ENCODE measurements at regions of chr12 and their contacts with region 1.

Region 1: DNA sequence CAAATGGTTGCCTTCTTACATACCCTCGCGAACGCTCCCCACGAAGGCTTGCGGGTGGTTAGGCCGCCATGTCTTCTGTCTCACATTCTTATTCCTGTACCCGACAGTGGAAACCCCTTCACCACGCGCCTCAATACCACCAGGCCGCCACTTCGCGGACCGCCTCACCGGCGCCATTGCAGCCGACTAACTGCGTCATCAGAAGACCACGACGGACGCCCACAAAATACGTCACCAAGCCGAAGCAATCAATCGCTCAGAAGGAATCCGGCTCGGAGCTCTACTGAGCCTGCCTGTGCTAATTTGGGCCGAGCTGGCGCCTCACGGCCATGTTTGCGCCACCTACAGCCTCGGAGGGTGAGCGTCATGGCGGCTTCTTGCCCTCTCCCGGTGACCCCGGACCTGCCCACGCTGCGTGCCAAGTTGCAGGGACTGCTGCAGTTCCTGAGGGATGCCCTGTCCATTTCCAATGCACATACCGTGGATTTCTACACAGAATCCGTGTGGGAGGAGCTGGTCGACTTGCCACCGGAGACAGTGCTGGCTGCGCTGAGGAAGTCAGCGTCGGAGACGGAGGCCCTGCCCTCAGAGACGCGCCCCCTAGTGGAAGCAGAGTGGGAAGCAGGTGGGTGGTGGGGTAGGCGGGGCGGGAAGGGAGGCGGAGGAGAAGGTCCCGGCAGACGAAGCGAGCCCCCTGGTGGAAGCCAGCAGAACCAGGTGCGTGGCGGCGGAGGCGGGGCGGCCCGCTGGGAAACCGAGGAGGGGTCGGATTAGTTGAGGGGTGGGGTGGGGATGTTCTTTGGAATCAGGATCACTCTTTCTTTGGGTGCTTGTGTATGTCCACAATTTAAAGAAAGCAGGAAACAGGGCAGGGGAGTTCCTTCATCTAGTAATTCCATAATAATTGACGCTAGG is at the starts of genes CCDC59 and METTL25:
- DNase-seq: peak; percentile 95
- ATAC-seq: peak; percentile 93
- H3K4me3 ChIP-seq: peak within 1 kb of the TSS; percentile 84 to 95 (median 94)
- H3K27ac ChIP-seq: peak within 1 kb of the TSS; percentile 98
- H3K4me1 ChIP-seq: peaks cover 30% of the 10 kb centered on the region
- H3K27me3 ChIP-seq: no peaks in the 10 kb centered on the region; a peak in 1 of 5 replicates
- CTCF ChIP-seq: peak; percentile 93
- EP300 ChIP-seq: peak; percentile 46; a peak in 1 of 4 replicates
- POLR2A ChIP-seq: peak; percentile 89 to 90
- RAD21 ChIP-seq: peak; percentile 51
- total RNA-seq, gene CCDC59: 81.3 and 93.4 TPM in 2 replicates
- total RNA-seq, gene METTL25: 7.8 and 8.6 TPM in 2 replicates

Region 2: DNA sequence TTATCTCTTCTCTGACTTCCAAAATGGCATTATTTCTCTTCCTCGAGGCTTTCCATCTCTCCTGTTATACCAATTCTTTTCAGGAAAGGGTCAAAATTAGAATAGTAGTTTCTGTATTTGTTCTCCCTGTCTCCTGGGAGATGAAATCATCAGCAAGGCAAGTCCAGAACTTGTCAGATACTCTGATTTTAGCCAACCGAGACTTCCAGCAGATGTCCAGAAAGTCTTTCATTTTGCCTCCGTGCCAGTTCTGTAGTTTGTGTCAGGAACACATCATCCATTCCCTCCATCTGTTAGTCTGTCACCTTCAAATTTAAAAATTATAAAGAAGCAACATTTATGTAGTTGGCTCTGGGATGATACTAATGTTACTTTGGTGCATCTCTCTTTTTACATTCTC is 276.0 kb before region 1 on chr12:
- CTCF ChIA-PET with region 1: no interaction called
- POLR2A ChIA-PET with region 1: no interaction called
- in situ Hi-C with region 1: no loop called
- intact Hi-C with region 1: no loop called
- DNase-seq: no peak
- ATAC-seq: no peak
- H3K4me3 ChIP-seq: no peak overlapping the region
- H3K27ac ChIP-seq: no peak overlapping the region
- H3K4me1 ChIP-seq: no peaks in the 10 kb centered on the region
- H3K27me3 ChIP-seq: no peaks in the 10 kb centered on the region
- CTCF ChIP-seq: no peak
- EP300 ChIP-seq: no peak
- POLR2A ChIP-seq: no peak
- RAD21 ChIP-seq: no peak

Region 3: GRCh38 chr12:82314406-82314892 is 44.0 kb before region 1 on chr12:
- CTCF ChIA-PET with region 1: no interaction called
- POLR2A ChIA-PET with region 1: interaction called, 6 read pairs
- in situ Hi-C with region 1: no loop called
- intact Hi-C with region 1: loop called (anchors 1 kb)
- DNase-seq: peak; percentile 79
- ATAC-seq: peak; percentile 99
- H3K4me3 ChIP-seq: peak overlapping the region; percentile 28 to 61 (median 54); a peak in 5 of 6 replicates
- H3K27ac ChIP-seq: peak overlapping the region; percentile 44
- H3K4me1 ChIP-seq: no peaks in the 10 kb centered on the region; the same call in 1 of the 2 replicates
- H3K27me3 ChIP-seq: no peaks in the 10 kb centered on the region
- CTCF ChIP-seq: no peak
- EP300 ChIP-seq: no peak
- POLR2A ChIP-seq: no peak
- RAD21 ChIP-seq: no peak

Measured in HepG2 (cell line).